Posterior vena cava (tissue), 2 donors: ENCODE measurements at regions of chr11 and their contacts with region 1.

Region 1: GRCh38 chr11:76807206-76807875 is 24.2 kb downstream of the TSKU start:
- DNase-seq: peak; percentile 97

Region 2: DNA sequence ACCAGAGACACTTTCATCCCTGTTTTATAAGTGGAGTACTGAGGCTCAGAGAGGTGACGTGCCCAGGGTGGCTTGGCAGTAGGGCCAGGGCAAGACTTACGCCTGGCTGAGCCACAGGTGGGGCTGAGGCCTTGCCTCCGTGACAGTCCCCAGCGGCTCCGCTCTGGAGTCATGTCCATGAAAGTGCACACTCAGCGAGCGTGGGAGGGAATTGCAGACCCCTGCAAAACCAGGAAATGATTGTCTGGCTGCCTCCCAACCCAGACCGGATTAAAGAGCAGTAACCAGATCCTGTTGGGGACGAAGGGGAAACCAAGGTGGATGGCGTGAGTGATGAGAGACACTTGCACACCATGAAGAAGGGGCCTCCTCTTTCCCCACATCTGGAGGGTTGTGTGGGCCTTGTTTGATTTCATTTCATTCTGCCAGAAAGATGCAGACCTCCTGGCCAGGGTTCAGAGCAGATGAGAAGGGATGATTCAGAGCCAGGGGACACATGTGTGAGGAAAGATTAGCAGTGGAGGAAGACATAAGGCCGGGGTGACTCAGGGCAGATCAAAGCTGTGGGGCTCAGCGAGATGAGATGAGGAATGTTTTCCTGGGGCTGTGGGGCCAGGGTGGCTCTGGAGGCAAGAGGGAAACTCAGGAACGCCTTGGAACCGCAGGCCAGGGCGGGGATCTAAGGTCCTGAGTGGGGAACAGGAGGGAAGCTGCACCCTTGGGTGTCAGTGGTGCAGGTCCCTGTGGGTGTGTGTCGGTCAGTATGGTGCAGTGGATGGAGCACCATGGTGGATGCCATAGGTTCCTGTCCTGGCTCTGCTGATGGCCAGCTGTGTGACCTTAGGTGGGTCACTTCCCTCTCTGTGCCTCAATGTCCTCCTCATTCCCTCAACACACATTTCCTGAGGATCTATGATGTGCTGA is 106.9 kb before region 1 on chr11:
- intact Hi-C with region 1: no loop called
- DNase-seq: peak; percentile 82

Region 3: GRCh38 chr11:76850130-76850529 is 42.8 kb after region 1 on chr11:
- intact Hi-C with region 1: no loop called
- DNase-seq: no peak

Region 4: GRCh38 chr11:76860539-76861475 is 53.5 kb after region 1 on chr11 and contains the start of gene ACER3:
- intact Hi-C with region 1: loop called (anchors 2 to 5 kb)
- DNase-seq: peak; percentile 97
- total RNA-seq, gene ACER3: 22.0 to 27.0 TPM

Region 5: DNA sequence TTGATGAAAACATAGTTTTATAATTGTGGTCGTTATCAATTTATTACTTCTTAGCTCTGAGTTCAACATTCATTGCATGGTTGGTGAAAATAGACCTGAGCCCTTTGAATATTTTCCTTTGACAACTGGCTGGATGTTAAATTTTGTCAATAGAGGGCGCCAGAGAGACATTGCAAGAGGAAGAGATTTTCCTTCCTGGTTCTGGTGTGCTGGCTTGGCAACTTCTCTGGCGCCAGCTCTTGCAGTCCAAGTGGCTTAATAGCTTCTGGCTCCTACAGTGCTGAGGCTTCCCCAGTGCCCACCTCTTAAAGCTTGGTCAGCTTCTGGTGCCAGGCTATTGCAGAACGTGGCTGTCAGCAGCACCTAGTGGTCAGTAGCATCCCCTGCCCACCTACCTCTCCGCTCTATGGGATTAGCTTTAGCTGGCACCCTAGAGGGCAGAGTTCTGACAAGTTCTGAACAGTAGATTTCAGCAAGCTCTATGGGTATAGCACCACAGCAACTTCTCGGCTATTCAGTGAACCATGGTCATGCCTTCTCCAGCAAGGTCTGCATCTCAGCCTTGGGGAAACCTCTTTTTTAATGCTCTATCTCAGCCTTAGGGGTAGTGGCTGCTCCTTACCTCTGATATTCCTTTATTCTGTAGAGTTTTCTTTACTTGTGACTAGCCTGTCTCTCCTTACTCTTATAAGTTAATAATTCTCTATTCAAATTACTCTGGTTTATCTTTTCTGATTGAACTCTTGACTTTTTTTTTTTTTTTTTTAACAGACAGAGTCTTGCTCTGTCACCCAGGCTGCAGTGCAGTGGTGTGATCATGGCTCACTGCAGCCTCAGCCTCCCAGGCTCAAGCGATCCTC is 112.8 kb after region 1 on chr11:
- intact Hi-C with region 1: loop called (anchors 5 to 10 kb)
- DNase-seq: peak; percentile 91

Region 6: DNA sequence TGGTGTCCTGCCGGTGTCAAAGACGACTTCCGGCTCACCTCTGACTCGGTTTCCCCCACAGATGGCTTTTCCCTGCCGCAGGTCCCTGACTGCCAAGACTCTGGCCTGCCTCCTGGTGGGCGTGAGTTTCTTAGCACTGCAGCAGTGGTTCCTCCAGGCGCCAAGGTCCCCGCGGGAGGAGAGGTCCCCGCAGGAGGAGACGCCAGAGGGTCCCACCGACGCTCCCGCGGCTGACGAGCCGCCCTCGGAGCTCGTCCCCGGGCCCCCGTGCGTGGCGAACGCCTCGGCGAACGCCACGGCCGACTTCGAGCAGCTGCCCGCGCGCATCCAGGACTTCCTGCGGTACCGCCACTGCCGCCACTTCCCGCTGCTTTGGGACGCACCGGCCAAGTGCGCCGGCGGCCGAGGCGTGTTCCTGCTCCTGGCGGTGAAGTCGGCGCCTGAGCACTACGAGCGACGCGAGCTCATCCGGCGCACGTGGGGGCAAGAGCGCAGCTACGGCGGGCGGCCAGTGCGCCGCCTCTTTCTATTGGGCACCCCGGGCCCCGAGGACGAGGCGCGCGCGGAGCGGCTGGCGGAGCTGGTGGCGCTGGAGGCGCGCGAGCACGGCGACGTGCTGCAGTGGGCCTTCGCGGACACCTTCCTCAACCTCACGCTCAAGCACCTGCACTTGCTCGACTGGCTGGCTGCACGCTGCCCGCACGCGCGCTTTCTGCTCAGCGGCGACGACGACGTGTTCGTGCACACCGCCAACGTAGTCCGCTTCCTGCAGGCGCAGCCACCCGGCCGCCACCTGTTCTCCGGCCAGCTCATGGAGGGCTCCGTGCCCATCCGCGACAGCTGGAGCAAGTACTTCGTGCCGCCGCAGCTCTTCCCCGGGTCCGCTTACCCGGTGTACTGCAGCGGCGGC is 232.4 kb after region 1 on chr11:
- intact Hi-C with region 1: loop called in 1 of 2 experiments (anchors 10 kb)
- DNase-seq: no peak